ENCODE measurements at regions of chr16 and their contacts with region 1.

Region 1: DNA sequence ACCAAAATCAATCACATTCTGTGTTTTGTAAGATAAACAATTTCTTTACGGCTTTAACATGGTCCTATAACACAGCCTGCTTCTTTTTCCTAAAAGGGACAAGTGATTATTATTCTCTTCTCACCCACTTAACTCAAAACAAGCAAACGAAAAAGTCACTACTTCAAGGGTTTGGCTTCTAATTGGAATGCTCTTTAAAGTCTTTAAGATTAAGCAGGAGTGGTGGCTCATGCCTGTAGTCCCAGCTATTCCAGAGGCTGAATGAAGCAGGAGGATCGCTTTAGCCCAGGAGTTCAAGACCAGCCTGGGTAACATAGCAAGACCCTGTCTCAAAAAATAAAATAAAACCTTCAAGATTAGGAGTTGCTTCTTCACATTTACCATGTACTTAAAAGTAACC is 66.6 kb upstream of the CNEP1R1 start:
- H3K4me3 ChIP-seq: no peak overlapping the region
- H3K27ac ChIP-seq: no peak overlapping the region
- H3K4me1 ChIP-seq: peaks cover 3% of the 10 kb centered on the region; the same call in 1 of the 2 replicates
- CTCF ChIP-seq: no peak

Region 2: GRCh38 chr16:49944221-49944620 is 14.2 kb before region 1 on chr16:
- CTCF ChIA-PET with region 1: interaction called, 14 read pairs
- POLR2A ChIA-PET with region 1: no interaction called
- H3K4me3 ChIP-seq: no peak overlapping the region
- H3K27ac ChIP-seq: no peak overlapping the region
- H3K4me1 ChIP-seq: no peaks in the 10 kb centered on the region
- CTCF ChIP-seq: no peak

Region 3: DNA sequence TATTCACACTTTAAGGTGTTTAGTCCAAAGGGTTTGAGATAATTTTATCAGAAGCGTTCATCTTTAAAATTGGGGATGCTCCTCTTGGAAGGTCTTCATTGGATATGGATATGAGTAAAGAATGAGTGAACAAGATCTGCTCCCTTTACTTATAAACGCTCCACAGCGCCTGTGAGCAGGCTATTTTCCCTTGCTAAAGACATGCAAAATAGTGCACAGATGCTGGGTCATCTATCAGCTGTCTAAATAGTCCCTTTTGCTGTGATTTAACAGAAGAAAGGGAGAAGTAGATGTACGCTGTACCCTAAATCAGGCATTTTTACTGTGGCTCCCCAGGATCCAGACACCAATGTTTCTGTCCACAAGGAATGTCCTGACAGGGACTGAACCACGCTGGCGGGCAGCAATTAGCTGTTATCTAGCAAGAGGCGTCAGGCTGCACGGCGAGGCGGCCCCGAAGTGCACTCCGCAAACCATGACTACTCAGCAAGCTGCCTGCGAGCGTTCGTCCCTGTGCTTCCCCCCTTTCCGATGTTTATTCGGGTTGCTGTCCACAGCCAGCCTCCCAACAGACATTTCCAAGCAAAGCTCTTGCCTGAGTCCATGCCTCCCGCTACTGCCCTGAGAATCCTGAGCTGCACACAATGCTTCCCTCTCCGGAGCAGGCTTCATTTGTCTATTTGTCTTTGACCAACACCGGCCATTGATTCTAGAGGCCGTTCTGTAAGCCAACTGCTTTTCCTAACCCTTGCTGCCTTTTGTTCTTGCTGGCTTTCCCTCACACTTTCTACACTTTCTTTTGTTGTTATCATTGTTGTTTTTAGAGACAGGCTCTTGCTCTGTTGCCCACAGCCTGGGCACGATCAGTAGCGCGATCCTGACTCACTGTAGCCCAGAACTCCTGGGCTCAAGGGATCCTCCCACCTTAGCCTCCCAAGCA is 10.9 kb after region 1 on chr16:
- CTCF ChIA-PET with region 1: interaction called, 12 read pairs
- POLR2A ChIA-PET with region 1: no interaction called
- H3K4me3 ChIP-seq: no peak overlapping the region
- H3K27ac ChIP-seq: no peak overlapping the region
- H3K4me1 ChIP-seq: no peaks in the 10 kb centered on the region
- CTCF ChIP-seq: no peak